Breast epithelium (tissue), 4 donors: ENCODE measurements at regions of chr22 and their contacts with region 1.

Region 1: DNA sequence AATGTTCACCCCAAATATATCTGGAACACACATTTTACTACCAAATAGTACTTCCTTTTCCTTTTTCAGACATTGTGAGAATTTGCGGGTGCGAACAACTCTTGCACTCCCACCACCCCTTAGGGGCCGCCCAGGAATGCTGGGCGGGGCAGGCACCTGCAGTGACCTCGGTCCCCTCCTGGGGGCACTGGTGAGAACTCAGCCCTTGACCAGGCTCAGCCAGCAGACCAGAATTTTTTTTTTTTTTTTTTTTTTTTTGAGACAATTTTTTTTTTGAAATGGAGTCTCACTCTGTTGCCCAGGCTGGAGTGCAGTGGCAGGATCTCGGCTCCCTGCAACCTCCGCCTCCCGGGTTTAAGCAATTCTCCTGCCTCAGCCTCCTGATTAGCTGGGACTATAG is 75.8 kb downstream of the ARHGAP8 start:
- DNase-seq: no peak
- H3K4me3 ChIP-seq: no peak overlapping the region
- H3K27ac ChIP-seq: no peak overlapping the region
- H3K4me1 ChIP-seq: no peaks in the 10 kb centered on the region
- H3K27me3 ChIP-seq: no peaks in the 10 kb centered on the region
- CTCF ChIP-seq: peak in 1 of 3 donors; percentile 23
- POLR2A ChIP-seq: no peak

Region 2: GRCh38 chr22:45096256-45096907 is 268.2 kb after region 1 on chr22:
- intact Hi-C with region 1: loop called (anchors 10 kb)
- DNase-seq: peak in 1 of 2 donors; percentile 29
- H3K4me3 ChIP-seq: no peak overlapping the region
- H3K27ac ChIP-seq: no peak overlapping the region
- H3K4me1 ChIP-seq: no peaks in the 10 kb centered on the region
- H3K27me3 ChIP-seq: peaks cover 0 to 31% of the 10 kb centered on the region in 2 donors
- CTCF ChIP-seq: peak in 2 of 3 donors; percentile 63 to 76
- POLR2A ChIP-seq: no peak